Right ventricle myocardium inferior (tissue), 1 donor: ENCODE measurements at regions of chrX and their contacts with region 1.

Region 1: DNA sequence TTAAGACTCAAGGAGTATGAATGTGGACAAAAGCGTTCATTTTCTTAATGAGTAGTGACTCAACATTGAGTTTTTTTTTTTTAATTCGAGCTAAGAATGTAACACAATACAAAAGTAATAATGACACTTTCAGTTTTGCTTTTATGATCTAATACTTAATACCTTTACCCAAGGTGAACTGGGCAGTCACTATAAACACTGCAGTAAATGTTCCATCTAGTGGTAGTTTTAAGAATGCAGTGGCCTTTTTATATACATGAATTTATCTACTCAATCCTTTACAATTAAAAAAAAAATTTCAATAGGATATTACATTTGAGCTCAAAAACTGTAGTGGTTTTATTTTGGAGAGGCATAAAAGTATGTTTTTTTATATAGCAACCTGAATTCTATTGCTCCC is 33.9 kb downstream of the PDK3 start:
- DNase-seq: no peak
- ATAC-seq: no peak

Region 2: GRCh38 chrX:24566240-24566639 is 67.3 kb after region 1 on chrX:
- intact Hi-C with region 1: loop called (anchors 2 kb)
- DNase-seq: no peak
- ATAC-seq: no peak

Region 3: GRCh38 chrX:24682739-24683432 is 183.9 kb after region 1 on chrX:
- intact Hi-C with region 1: no loop called
- DNase-seq: no peak
- ATAC-seq: no peak